ENCODE measurements at regions of chr6 and their contacts with region 1.

Region 1: GRCh38 chr6:5143634-5144311 is 58.6 kb downstream of the PPP1R3G start:
- DNase-seq: peak; percentile 79
- H3K4me3 ChIP-seq: no peak overlapping the region
- H3K27ac ChIP-seq: no peak overlapping the region
- H3K4me1 ChIP-seq: peaks cover 13% of the 10 kb centered on the region
- CTCF ChIP-seq: peak; percentile 97

Region 2: GRCh38 chr6:5174244-5174643 is 30.5 kb after region 1 on chr6:
- CTCF ChIA-PET with region 1: no interaction called
- POLR2A ChIA-PET with region 1: interaction called, 3 read pairs
- intact Hi-C with region 1: loop called (anchors 1 kb)
- DNase-seq: peak; percentile 86
- H3K4me3 ChIP-seq: peak overlapping the region; percentile 59
- H3K27ac ChIP-seq: peak overlapping the region; percentile 89
- H3K4me1 ChIP-seq: peaks cover 39% of the 10 kb centered on the region
- CTCF ChIP-seq: no peak

Region 3: DNA sequence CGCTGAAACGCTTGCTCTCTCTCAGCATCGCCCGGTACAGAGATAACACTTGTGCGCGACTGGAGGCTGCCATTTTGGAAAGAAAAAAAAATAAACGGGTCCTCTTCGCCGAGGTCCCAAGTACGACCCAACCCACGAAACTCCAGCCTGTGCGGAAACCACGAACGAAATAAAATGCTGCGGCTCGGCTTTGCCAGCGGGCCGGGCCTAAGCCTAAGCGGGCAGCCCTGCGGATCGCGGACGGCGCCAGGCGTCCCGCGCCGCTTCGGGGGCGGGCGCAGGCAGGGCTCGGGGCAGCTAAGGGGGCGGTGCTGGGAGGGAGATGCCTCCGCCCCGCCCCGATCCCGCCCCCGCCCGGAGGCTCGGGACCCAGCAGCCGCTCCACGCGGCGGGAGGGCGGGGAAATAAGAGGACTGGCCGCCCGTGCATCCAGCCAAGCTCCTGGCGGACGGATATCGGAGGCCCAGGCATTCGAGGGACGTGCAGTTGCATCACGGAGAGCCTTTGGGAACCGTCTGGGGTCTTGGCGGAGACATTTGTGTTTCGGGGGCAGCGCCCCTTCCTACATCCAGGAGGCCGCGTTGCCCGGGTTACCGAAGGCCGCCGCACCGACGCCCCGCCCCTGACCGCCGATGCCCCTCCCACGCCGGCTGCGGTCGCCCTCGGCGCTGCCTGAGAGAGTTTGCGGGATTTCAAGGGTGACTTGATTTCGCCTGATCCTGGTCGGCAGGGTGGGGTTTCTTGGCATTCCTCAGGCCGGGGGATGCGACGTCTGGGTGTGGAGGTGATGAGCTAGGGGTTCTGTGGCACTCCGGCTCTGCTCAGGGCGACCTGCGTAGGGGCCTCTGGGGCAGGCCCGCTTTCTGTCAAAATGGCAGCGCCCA is 117.1 kb after region 1 on chr6 and contains the starts of genes FARS2 and LYRM4:
- CTCF ChIA-PET with region 1: no interaction called
- POLR2A ChIA-PET with region 1: no interaction called
- intact Hi-C with region 1: loop called (anchors 5 kb)
- DNase-seq: peak; percentile 88
- H3K4me3 ChIP-seq: peak within 1 kb of the TSS; percentile 98
- H3K27ac ChIP-seq: peak within 1 kb of the TSS; percentile 77
- H3K4me1 ChIP-seq: peaks cover 18% of the 10 kb centered on the region
- CTCF ChIP-seq: 0 out of 2 replicates have a peak, but pooled peaks have one; percentile 19
- total RNA-seq, gene FARS2: 14.3 and 18.3 TPM in 2 replicates
- total RNA-seq, gene LYRM4: 19.6 and 21.9 TPM in 2 replicates

Region 4: GRCh38 chr6:5302995-5303622 is 159.3 kb after region 1 on chr6:
- CTCF ChIA-PET with region 1: interaction called, 6 read pairs
- POLR2A ChIA-PET with region 1: interaction called, 4 read pairs
- intact Hi-C with region 1: loop called (anchors 1 kb)
- DNase-seq: peak; percentile 59
- H3K4me3 ChIP-seq: no peak overlapping the region
- H3K27ac ChIP-seq: no peak overlapping the region
- H3K4me1 ChIP-seq: peaks cover 7% of the 10 kb centered on the region
- CTCF ChIP-seq: peak; percentile 74

Region 5: GRCh38 chr6:5379647-5380242 is 236.0 kb after region 1 on chr6:
- CTCF ChIA-PET with region 1: interaction called, 3 read pairs
- POLR2A ChIA-PET with region 1: no interaction called
- intact Hi-C with region 1: loop called (anchors 2 kb)
- DNase-seq: peak; percentile 46
- H3K4me3 ChIP-seq: no peak overlapping the region
- H3K27ac ChIP-seq: no peak overlapping the region
- H3K4me1 ChIP-seq: no peaks in the 10 kb centered on the region
- CTCF ChIP-seq: peak; percentile 80

Region 6: GRCh38 chr6:5398530-5398929 is 254.8 kb after region 1 on chr6:
- CTCF ChIA-PET with region 1: no interaction called
- POLR2A ChIA-PET with region 1: no interaction called
- intact Hi-C with region 1: loop called (anchors 2 kb)
- DNase-seq: peak; percentile 63
- H3K4me3 ChIP-seq: no peak overlapping the region
- H3K27ac ChIP-seq: no peak overlapping the region
- H3K4me1 ChIP-seq: no peaks in the 10 kb centered on the region
- CTCF ChIP-seq: peak; percentile 82

Measured in OCI-LY7 (cell line).